Right ventricle myocardium inferior (tissue), 1 donor: ENCODE measurements at regions of chr9 and their contacts with region 1.

Region 1: GRCh38 chr9:124835026-124835557 is 18.2 kb upstream of the WDR38 start:
- DNase-seq: peak; percentile 88
- ATAC-seq: peak; percentile 59

Region 2: GRCh38 chr9:124795881-124796415 is 39.1 kb before region 1 on chr9:
- intact Hi-C with region 1: loop called (anchors 2 kb)
- DNase-seq: no peak
- ATAC-seq: no peak